ENCODE measurements at regions of chr7 and their contacts with region 1.

Region 1: GRCh38 chr7:73738612-73739374 is at the start of gene ABHD11:
- DNase-seq: peak; percentile 99
- ATAC-seq: peak; percentile 89
- H3K4me3 ChIP-seq: peak within 1 kb of the TSS; percentile 61 to 94 (median 91)
- H3K4me3 Mint-ChIP-seq: peak within 1 kb of the TSS; percentile 91
- H3K27ac ChIP-seq: peak within 1 kb of the TSS; percentile 79 to 93
- H3K27ac Mint-ChIP-seq: peak within 1 kb of the TSS; percentile 89
- H3K4me1 ChIP-seq: peaks cover 4 to 18% of the 10 kb centered on the region in 2 donors
- H3K4me1 Mint-ChIP-seq: peaks cover 11% of the 10 kb centered on the region
- H3K27me3 ChIP-seq: peaks cover 0 to 4% (median 0%) of the 10 kb centered on the region in 4 experiments
- H3K27me3 Mint-ChIP-seq: no peaks in the 10 kb centered on the region
- CTCF ChIP-seq: no peak
- total RNA-seq, gene ABHD11: 23.2 and 27.7 TPM in 2 replicates

Region 2: GRCh38 chr7:73522105-73522872 is 216.5 kb before region 1 on chr7 and contains the start of gene BAZ1B:
- CTCF ChIA-PET with region 1: no interaction called
- POLR2A ChIA-PET with region 1: interaction called, 5 read pairs
- intact Hi-C with region 1: loop called (anchors 1 kb)
- DNase-seq: peak; percentile 98
- ATAC-seq: peak; percentile 91
- H3K4me3 ChIP-seq: peak within 1 kb of the TSS; percentile 50 to 78 (median 68)
- H3K4me3 Mint-ChIP-seq: peak within 1 kb of the TSS; percentile 95
- H3K27ac ChIP-seq: peak within 1 kb of the TSS; percentile 82 to 87
- H3K27ac Mint-ChIP-seq: peak within 1 kb of the TSS; percentile 98
- H3K4me1 ChIP-seq: peaks cover 58 to 63% of the 10 kb centered on the region in 2 donors
- H3K4me1 Mint-ChIP-seq: peaks cover 60% of the 10 kb centered on the region
- H3K27me3 ChIP-seq: no peaks in the 10 kb centered on the region
- H3K27me3 Mint-ChIP-seq: no peaks in the 10 kb centered on the region
- CTCF ChIP-seq: no peak
- total RNA-seq, gene BAZ1B: 67.0 and 68.1 TPM in 2 replicates

Region 3: DNA sequence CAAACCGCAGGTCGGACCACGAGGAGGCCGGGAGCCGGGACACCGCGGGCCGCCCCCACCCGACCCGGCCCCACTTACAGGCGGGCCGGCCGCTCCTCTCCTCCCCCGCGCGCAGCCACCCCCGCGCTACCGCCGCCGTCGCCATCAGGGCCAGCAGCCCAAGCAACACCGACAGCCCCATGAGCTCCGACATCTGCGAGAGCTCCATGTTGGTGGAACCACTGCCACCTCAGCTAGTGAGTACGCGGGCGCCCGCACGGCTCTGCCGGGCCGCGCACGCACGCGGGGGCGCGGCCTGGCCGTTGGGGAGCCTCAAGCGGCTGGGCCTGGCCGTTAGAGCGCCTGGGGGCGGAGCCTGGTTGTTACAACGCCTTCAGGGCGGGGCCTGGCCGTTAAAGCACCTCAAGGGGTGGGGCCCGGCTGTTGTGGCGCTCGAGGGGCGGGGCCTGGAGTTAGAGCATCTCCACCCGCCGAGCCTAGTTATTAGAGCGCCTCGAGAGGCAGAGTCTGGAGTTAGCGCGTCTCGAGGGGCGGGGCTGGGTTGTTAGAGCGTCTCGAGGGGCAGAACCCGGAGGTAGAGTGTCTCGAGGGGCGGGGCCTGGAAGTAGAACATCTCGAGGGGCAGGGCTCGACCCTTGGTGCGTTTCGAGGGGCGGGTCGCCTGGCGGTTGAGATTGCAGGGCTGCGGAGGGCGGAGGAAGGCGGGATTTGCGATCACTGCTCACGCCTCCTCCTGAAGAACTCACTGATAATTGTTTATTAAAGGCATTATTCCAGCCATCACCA is 160.3 kb before region 1 on chr7 and contains the start of gene TBL2:
- CTCF ChIA-PET with region 1: interaction called, 3 read pairs
- POLR2A ChIA-PET with region 1: no interaction called
- intact Hi-C with region 1: loop called (anchors 1 kb)
- DNase-seq: peak; percentile 99
- ATAC-seq: peak; percentile 88
- H3K4me3 ChIP-seq: peak within 1 kb of the TSS; percentile 61 to 90 (median 81)
- H3K4me3 Mint-ChIP-seq: peak within 1 kb of the TSS; percentile 94
- H3K27ac ChIP-seq: peak within 1 kb of the TSS; percentile 90 to 93
- H3K27ac Mint-ChIP-seq: peak within 1 kb of the TSS; percentile 94
- H3K4me1 ChIP-seq: peaks cover 11 to 21% of the 10 kb centered on the region in 2 donors
- H3K4me1 Mint-ChIP-seq: peaks cover 20% of the 10 kb centered on the region
- H3K27me3 ChIP-seq: no peaks in the 10 kb centered on the region
- H3K27me3 Mint-ChIP-seq: no peaks in the 10 kb centered on the region
- CTCF ChIP-seq: no peak
- total RNA-seq, gene TBL2: 34.6 and 34.7 TPM in 2 replicates

Region 4: DNA sequence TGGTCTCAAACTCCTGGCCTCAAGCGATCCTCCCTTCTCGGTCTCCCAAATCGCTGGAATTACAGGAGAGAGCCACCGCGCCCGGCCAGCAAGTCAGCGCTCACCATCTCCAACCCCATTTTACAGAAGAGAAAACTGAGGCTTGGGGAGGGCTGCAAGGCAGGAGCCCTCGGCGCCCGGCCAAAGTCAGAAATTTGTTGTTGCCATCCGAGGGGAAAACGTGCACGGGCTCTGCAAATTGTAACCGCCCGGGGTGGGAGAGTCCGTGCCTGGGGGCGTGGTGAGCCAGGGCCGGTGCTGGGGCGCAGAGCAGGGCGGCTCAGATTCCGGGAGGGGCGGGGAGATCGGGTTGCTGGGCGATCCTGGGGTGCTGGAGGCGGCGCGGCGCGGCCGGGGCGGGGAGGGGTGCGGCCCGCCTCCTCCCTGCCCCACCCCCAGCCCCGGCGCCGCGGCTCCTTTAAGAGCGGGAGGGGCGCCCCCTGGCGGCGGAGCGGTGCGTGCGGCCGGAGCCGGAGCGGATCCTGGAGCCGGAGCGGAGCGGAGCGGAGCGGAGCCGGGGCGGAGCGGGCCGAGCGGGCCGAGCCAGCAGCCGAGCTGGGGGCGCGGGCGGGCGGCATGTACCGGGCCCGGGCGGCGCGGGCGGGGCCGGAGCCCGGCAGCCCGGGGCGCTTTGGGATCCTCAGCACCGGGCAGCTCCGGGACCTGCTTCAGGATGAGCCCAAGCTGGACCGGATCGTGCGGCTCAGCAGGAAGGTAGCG is 71.3 kb before region 1 on chr7 and contains the start of gene VPS37D:
- CTCF ChIA-PET with region 1: no interaction called
- POLR2A ChIA-PET with region 1: interaction called, 11 read pairs
- intact Hi-C with region 1: loop called (anchors 1 kb)
- DNase-seq: peak; percentile 94
- ATAC-seq: peak; percentile 94
- H3K4me3 ChIP-seq: peak within 1 kb of the TSS in 4 of 5 experiments; percentile 39 to 59 (median 48)
- H3K4me3 Mint-ChIP-seq: peak within 1 kb of the TSS; percentile 83
- H3K27ac ChIP-seq: no peak within 1 kb of the TSS
- H3K27ac Mint-ChIP-seq: peak within 1 kb of the TSS; percentile 20
- H3K4me1 ChIP-seq: peaks cover 8 to 16% of the 10 kb centered on the region in 2 donors
- H3K4me1 Mint-ChIP-seq: peaks cover 8% of the 10 kb centered on the region
- H3K27me3 ChIP-seq: peaks cover 0 to 55% (median 21%) of the 10 kb centered on the region in 4 experiments
- H3K27me3 Mint-ChIP-seq: peaks cover 42% of the 10 kb centered on the region
- CTCF ChIP-seq: peak; percentile 73
- total RNA-seq, gene VPS37D: 0.71 and 0.78 TPM in 2 replicates

Region 5: DNA sequence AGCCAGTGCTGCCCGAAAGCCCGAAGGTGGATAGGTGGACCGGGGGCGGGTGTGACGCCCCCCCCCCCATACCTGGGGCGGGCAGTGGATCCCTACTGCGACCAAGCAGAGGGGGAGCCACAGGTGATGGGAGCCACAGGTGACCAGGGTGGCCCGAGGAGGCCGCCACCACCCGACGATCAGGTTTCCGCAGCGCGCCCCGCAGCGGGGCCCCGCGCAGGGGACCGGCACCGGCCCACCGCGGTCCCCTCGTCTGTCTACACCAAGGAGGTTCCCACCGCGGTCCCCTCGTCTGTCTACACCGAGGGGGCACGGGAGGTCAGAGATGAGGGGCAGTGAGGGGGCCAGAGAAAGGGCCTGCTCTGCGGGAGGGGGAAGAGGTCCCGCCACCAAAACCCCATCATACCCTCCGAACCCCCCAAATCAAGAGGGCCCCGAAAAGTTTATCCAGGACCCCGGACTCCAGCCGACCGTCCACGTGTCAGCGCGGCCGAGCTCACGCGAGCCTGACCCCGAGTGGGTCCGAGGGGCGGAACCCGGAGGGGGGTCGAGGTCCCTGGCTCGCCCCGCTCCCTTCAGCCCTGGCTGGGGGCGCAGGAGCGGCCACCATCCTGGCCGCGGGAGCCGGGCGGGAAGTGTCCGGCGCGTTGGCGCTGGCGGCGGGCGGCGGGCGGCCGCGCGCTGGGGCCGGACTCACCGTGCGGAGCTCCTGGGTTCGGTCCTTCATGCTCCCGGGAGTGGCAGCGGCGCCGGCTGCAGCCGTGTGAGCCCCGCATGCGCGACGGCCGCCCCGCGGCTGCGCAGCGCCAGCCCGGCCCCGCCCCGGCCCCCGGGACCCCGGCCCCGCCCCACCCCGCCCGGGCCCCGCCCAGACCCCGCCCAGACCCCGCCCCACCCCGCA is 19.6 kb before region 1 on chr7 and contains the start of gene STX1A:
- CTCF ChIA-PET with region 1: interaction called, 12 read pairs
- POLR2A ChIA-PET with region 1: interaction called, 4 read pairs
- intact Hi-C with region 1: loop called (anchors 1 kb)
- DNase-seq: peak; percentile 82
- ATAC-seq: peak; percentile 89
- H3K4me3 ChIP-seq: peak within 1 kb of the TSS; percentile 15 to 70 (median 59)
- H3K4me3 Mint-ChIP-seq: peak within 1 kb of the TSS; percentile 83
- H3K27ac ChIP-seq: no peak within 1 kb of the TSS
- H3K27ac Mint-ChIP-seq: peak within 1 kb of the TSS; percentile 37
- H3K4me1 ChIP-seq: peaks cover 25 to 31% of the 10 kb centered on the region in 2 donors
- H3K4me1 Mint-ChIP-seq: peaks cover 20% of the 10 kb centered on the region
- H3K27me3 ChIP-seq: peaks cover 0 to 57% (median 25%) of the 10 kb centered on the region in 4 experiments
- H3K27me3 Mint-ChIP-seq: peaks cover 27% of the 10 kb centered on the region
- CTCF ChIP-seq: no peak
- total RNA-seq, gene STX1A: 3.0 and 3.1 TPM in 2 replicates

Region 6: DNA sequence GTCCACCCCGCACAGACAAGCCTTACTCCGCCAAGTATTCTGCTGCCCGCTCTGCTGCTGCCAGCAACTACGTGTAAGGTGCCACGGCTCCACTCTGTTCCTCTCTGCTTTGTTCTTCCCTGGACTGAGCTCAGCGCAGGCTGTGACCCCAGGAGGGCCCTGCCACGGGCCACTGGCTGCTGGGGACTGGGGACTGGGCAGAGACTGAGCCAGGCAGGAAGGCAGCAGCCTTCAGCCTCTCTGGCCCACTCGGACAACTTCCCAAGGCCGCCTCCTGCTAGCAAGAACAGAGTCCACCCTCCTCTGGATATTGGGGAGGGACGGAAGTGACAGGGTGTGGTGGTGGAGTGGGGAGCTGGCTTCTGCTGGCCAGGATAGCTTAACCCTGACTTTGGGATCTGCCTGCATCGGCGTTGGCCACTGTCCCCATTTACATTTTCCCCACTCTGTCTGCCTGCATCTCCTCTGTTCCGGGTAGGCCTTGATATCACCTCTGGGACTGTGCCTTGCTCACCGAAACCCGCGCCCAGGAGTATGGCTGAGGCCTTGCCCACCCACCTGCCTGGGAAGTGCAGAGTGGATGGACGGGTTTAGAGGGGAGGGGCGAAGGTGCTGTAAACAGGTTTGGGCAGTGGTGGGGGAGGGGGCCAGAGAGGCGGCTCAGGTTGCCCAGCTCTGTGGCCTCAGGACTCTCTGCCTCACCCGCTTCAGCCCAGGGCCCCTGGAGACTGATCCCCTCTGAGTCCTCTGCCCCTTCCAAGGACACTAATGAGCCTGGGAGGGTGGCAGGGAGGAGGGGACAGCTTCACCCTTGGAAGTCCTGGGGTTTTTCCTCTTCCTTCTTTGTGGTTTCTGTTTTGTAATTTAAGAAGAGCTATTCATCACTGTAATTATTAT is 93.2 kb after region 1 on chr7:
- CTCF ChIA-PET with region 1: no interaction called
- POLR2A ChIA-PET with region 1: no interaction called
- intact Hi-C with region 1: no loop called
- DNase-seq: no peak
- ATAC-seq: no peak
- H3K4me3 ChIP-seq: no peak overlapping the region
- H3K4me3 Mint-ChIP-seq: no peak overlapping the region
- H3K27ac ChIP-seq: no peak overlapping the region
- H3K27ac Mint-ChIP-seq: no peak overlapping the region
- H3K4me1 ChIP-seq: peaks cover 13 to 14% of the 10 kb centered on the region in 2 donors
- H3K4me1 Mint-ChIP-seq: peaks cover 20% of the 10 kb centered on the region
- H3K27me3 ChIP-seq: no peaks in the 10 kb centered on the region
- H3K27me3 Mint-ChIP-seq: no peaks in the 10 kb centered on the region
- CTCF ChIP-seq: no peak

Region 7: DNA sequence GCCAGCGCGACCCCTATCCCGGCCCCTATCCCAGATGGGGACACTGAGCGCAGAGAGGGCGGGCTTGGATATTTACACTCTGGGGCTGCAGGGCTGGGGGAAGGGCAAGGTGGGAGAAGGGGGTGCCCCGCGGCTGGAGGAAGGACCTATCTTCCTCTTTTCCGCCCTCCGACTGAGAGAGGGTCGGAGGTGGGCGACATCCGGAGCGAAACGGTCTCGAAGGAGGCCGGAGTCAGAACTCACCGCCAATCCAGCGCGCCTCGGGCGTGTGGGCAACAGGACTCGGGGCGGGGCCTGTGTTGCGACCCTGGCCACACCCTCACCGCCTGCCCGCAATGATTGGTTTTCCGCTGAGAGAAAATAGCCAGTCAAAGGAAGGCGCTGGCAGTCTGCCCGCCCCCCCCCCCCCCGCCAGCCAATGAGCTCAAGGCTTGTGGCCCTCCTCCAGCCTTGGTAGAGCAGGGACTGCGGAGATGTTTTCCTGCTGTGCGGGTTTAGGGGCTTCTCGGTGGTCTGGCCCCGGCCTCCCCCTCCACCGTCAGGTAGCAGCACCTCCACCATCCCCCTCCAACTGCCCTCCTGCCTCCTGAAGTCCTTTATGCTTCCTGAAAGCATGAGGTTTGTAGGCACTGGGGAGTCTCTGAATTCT is 103.6 kb after region 1 on chr7 and contains the start of gene METTL27:
- CTCF ChIA-PET with region 1: interaction called, 3 read pairs
- POLR2A ChIA-PET with region 1: no interaction called
- intact Hi-C with region 1: loop called (anchors 2 kb)
- DNase-seq: peak; percentile 90
- ATAC-seq: peak; percentile 99
- H3K4me3 ChIP-seq: peak within 1 kb of the TSS; percentile 35 to 79 (median 65)
- H3K4me3 Mint-ChIP-seq: peak within 1 kb of the TSS; percentile 87
- H3K27ac ChIP-seq: peak within 1 kb of the TSS; percentile 24 to 47
- H3K27ac Mint-ChIP-seq: peak within 1 kb of the TSS; percentile 70
- H3K4me1 ChIP-seq: peaks cover 25 to 40% of the 10 kb centered on the region in 2 donors
- H3K4me1 Mint-ChIP-seq: peaks cover 32% of the 10 kb centered on the region
- H3K27me3 ChIP-seq: no peaks in the 10 kb centered on the region
- H3K27me3 Mint-ChIP-seq: no peaks in the 10 kb centered on the region
- CTCF ChIP-seq: no peak
- total RNA-seq, gene METTL27: 1.5 and 1.9 TPM in 2 replicates

Region 8: DNA sequence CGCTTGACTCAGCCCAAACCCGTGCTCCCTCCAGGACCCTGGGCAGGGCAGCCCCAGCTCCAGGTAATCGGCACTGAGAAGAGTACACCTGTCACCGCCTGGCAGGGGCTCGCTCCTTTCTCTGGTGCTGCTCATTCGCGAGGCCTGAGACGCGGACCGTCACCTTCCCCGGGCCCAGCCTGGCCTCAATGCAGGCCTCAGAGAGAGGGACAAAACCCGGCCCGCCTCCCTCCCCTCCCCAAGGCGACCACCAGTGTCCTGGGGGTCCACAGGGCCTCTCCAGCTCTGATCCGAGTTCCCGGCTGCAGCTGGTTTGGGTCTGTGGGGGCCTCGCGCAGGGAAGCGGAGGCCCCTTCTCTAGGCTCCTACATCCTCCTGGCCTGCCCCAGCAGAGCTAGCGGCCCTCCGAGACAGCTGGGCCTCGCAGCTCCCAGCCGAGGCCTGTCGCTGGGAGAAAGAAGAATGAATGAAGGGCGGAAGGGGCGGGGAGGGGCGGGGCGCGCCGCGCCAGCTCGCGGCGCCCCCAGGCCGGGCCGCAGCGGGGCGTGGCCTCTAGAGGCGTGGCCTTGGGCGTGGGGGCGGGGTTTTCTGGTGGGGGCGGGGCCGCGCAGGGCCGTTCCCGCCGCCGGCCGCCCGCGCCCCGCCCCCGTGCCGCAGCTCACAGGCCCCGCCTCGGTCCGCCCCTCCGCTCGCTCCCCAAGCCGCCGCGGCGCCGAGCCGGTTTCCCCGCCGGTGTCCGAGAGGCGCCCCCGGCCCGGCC is 344.5 kb after region 1 on chr7 and contains the start of gene LIMK1:
- CTCF ChIA-PET with region 1: no interaction called
- POLR2A ChIA-PET with region 1: no interaction called
- intact Hi-C with region 1: loop called (anchors 10 kb)
- DNase-seq: peak; percentile 89
- ATAC-seq: peak; percentile 95
- H3K4me3 ChIP-seq: peak within 1 kb of the TSS; percentile 19 to 68 (median 53)
- H3K4me3 Mint-ChIP-seq: peak within 1 kb of the TSS; percentile 86
- H3K27ac ChIP-seq: peak within 1 kb of the TSS in 1 of 2 donors; percentile 33
- H3K27ac Mint-ChIP-seq: peak within 1 kb of the TSS; percentile 63
- H3K4me1 ChIP-seq: peaks cover 7 to 21% of the 10 kb centered on the region in 2 donors
- H3K4me1 Mint-ChIP-seq: peaks cover 16% of the 10 kb centered on the region
- H3K27me3 ChIP-seq: no peaks in the 10 kb centered on the region
- H3K27me3 Mint-ChIP-seq: no peaks in the 10 kb centered on the region
- CTCF ChIP-seq: no peak
- total RNA-seq, gene LIMK1: 63.8 and 70.8 TPM in 2 replicates